Activated B cell treated with CpG ODN at 0.5 μM for 24 hours (primary cell): ENCODE measurements at regions of chr4 and their contacts with region 1.

Region 1: GRCh38 chr4:37139982-37140381 is 104.6 kb upstream of the NWD2 start:
- DNase-seq: no peak
- ATAC-seq: no peak
- H3K4me3 Mint-ChIP-seq: no peak overlapping the region
- H3K27ac Mint-ChIP-seq: no peak overlapping the region
- H3K4me1 Mint-ChIP-seq: no peaks in the 10 kb centered on the region
- H3K27me3 Mint-ChIP-seq: no peaks in the 10 kb centered on the region
- CTCF ChIP-seq: no peak

Region 2: DNA sequence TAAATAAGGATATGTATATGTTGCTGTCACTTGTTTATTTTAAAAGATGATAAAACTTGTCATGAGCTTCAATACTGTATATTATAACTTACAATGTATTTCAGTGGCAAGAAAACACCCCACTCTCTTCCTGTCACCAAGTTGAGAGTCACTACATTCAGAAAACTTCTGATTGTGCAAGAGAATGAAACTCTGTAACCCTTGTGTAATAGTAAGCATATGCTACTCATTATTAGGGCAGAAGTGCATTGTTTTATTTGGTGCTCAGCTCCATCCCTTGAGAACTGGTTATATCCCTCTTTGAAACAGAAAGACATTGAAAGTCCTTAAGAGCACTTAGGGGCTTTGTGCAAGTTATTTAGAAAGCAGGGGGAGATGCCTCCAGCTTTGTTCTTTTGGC is 1490.2 kb before region 1 on chr4:
- CTCF ChIA-PET with region 1: no interaction called
- POLR2A ChIA-PET with region 1: no interaction called
- intact Hi-C with region 1: loop called (anchors 10 kb)
- DNase-seq: no peak
- ATAC-seq: no peak
- H3K4me3 Mint-ChIP-seq: no peak overlapping the region
- H3K27ac Mint-ChIP-seq: no peak overlapping the region
- H3K4me1 Mint-ChIP-seq: no peaks in the 10 kb centered on the region
- H3K27me3 Mint-ChIP-seq: no peaks in the 10 kb centered on the region
- CTCF ChIP-seq: no peak